Left lung (tissue), 14 donors: ENCODE measurements at regions of chr16 and their contacts with region 1.

Region 1: DNA sequence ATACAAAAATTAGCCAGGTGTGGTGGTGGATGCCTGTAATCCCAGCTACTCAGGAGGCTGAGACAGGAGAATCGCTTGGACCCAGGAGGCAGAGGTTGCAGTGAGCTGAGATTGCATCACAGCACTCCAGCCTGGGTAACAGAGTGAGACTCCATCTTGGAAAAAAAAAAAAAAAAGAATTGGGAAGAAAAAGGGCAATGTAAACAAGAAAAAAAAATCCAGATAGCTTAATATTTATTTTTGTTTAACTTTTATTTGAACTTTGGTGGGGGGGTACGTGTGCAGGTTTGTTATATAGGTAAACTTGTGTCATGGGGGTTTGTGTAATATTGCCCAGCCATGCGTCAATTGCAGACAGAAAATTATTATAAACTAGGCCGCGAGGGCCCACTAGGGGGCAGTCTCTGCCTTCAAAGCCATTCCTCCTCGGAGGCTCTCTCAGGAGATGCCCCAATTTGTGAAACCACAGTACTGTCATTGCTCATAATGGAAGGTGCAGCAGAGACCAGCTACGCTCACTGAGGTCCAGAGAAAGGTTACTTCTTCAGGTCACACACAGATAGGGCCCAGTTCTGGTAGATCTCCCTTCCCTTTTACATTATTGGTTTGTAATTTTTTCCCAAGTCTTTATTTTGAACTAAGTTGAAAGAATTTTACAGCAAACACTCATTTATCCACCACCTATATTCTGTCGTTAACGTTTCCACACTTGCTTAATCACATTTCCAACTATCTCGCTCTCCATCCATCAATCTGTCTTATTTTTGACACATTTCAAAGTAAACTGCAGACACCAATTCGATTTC is 206.2 kb downstream of the PRKCB start:
- DNase-seq: peak in 3 of 4 donors; percentile 24 to 67 (median 45)
- ATAC-seq: peak; percentile 92
- H3K4me3 ChIP-seq: no peak overlapping the region
- H3K27ac ChIP-seq: no peak overlapping the region
- H3K4me1 ChIP-seq: no peaks in the 10 kb centered on the region
- H3K27me3 ChIP-seq: peaks cover 0 to 8% of the 10 kb centered on the region in 2 donors
- CTCF ChIP-seq: peak; percentile 44 to 70

Region 2: GRCh38 chr16:23847948-23848347 is 194.1 kb before region 1 on chr16:
- intact Hi-C with region 1: no loop called
- DNase-seq: no peak
- ATAC-seq: no peak
- H3K4me3 ChIP-seq: no peak overlapping the region
- H3K27ac ChIP-seq: no peak overlapping the region
- H3K4me1 ChIP-seq: peaks cover 0 to 38% of the 10 kb centered on the region in 2 donors
- H3K27me3 ChIP-seq: no peaks in the 10 kb centered on the region
- CTCF ChIP-seq: no peak

Region 3: GRCh38 chr16:24151482-24151939 is 109.5 kb after region 1 on chr16:
- intact Hi-C with region 1: no loop called
- DNase-seq: peak in 1 of 4 donors; percentile 25
- ATAC-seq: peak; percentile 86
- H3K4me3 ChIP-seq: no peak overlapping the region
- H3K27ac ChIP-seq: no peak overlapping the region
- H3K4me1 ChIP-seq: no peaks in the 10 kb centered on the region
- H3K27me3 ChIP-seq: no peaks in the 10 kb centered on the region
- CTCF ChIP-seq: no peak

Region 4: GRCh38 chr16:24504472-24505345 is 462.7 kb after region 1 on chr16:
- intact Hi-C with region 1: loop called in 1 of 2 experiments (anchors 10 kb)
- DNase-seq: peak in 1 of 4 donors; percentile 69
- ATAC-seq: peak; percentile 96
- H3K4me3 ChIP-seq: no peak overlapping the region
- H3K27ac ChIP-seq: no peak overlapping the region
- H3K4me1 ChIP-seq: no peaks in the 10 kb centered on the region
- H3K27me3 ChIP-seq: peaks cover 0 to 18% of the 10 kb centered on the region in 2 donors
- CTCF ChIP-seq: peak; percentile 64 to 82